ENCODE measurements at regions of chr1 and their contacts with region 1.

Region 1: GRCh38 chr1:161225534-161226319 is at the start of gene TOMM40L:
- DNase-seq: peak in 1 of 2 donors; percentile 99
- H3K4me3 ChIP-seq: peak within 1 kb of the TSS; percentile 73 to 88
- H3K27ac ChIP-seq: peak within 1 kb of the TSS; percentile 80
- H3K4me1 ChIP-seq: peaks cover 30% of the 10 kb centered on the region
- H3K27me3 ChIP-seq: no peaks in the 10 kb centered on the region
- CTCF ChIP-seq: peak in 1 of 3 experiments; percentile 61
- POLR2A ChIP-seq: no peak
- total RNA-seq, gene TOMM40L: 15.0 TPM

Region 2: DNA sequence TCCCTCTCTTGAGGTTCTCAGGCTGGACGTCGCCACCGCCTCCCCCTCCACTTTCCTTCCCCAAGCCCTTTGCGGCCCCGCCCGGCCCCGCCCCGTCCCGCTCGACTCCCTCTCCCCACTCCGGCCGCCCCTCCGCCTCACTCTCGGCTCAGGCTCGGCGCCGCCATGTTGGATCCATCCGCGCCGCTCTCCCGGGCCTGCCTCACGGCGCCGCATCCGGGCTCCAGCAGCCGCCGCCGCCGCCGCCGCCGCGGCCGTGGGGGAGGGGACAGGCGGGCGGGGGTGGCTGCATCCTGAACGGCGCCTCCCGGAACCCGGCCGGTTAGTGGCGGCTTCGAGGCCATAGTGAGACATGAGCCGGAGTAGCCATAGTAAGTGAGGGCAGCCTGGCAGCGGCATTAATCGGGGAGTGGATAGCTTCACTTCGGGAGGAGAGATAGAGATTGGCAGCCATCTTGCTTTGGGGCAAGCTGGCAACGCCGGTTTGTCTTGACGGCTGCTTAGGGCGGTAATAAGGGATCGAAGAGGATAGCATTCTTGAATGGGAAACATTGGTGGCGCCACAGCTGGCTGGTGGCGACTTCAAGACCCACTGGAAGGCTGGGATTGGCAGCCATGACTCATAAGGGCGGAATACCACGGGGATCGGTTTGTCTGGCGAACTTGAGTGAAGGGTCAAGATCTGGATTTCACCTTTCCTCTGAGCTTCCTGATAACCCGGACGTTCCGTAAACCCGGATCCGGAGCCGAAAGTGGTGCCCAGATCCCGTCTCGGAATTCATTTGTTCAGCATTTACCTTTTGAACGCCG is 93.1 kb before region 1 on chr1 and contains the start of gene DEDD:
- intact Hi-C with region 1: no loop called
- DNase-seq: peak in 1 of 2 donors; percentile 96
- H3K4me3 ChIP-seq: peak within 1 kb of the TSS; percentile 59 to 73
- H3K27ac ChIP-seq: peak within 1 kb of the TSS; percentile 96
- H3K4me1 ChIP-seq: peaks cover 52% of the 10 kb centered on the region
- H3K27me3 ChIP-seq: no peaks in the 10 kb centered on the region
- CTCF ChIP-seq: no peak
- POLR2A ChIP-seq: peak in 1 of 2 donors; percentile 36
- total RNA-seq, gene DEDD: 42.0 TPM

Region 3: DNA sequence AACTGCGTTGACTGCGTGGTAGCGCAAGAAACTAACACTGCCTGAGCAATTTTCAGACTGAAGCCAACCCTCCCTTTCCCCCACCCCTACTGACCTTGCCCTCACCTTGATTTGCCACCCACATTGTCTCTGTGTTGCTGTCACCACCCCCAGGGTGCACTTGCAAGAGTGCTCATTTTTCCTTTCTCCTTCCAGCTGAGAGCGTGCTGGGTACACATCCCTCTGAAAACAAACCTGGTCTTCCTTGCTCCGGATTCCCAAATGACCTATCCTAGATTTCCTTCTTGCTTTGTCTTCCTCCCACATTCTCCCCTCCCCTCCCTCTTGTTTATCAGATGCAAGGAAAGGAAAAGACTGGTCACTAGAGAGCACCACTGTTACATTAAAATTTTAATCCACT is 59.8 kb after region 1 on chr1:
- intact Hi-C with region 1: loop called (anchors 2 kb)
- DNase-seq: no peak
- H3K4me3 ChIP-seq: no peak overlapping the region
- H3K27ac ChIP-seq: no peak overlapping the region
- H3K4me1 ChIP-seq: no peaks in the 10 kb centered on the region
- H3K27me3 ChIP-seq: no peaks in the 10 kb centered on the region
- CTCF ChIP-seq: no peak
- POLR2A ChIP-seq: no peak

Region 4: DNA sequence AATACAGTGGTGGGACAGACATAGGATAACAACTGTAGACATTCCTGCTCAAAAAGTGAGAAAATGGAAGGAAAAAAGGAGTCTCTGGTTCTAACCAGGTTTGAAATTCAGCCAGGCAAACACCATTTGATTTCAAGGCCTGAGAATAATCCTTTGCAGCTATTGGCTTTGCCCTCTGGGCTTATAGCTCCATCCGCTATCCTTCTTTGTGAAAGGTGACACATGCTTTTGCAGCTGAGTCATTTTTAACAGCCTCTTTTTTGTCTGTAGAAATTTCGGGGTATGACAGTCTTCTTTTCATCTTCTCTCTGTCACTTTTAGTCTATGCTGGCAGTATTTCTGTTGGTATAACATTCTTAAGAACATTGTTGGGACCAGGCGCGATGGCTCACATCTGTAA is 104.6 kb after region 1 on chr1:
- intact Hi-C with region 1: no loop called
- DNase-seq: no peak
- H3K4me3 ChIP-seq: no peak overlapping the region
- H3K27ac ChIP-seq: no peak overlapping the region
- H3K4me1 ChIP-seq: no peaks in the 10 kb centered on the region
- H3K27me3 ChIP-seq: no peaks in the 10 kb centered on the region
- CTCF ChIP-seq: no peak
- POLR2A ChIP-seq: no peak

Region 5: DNA sequence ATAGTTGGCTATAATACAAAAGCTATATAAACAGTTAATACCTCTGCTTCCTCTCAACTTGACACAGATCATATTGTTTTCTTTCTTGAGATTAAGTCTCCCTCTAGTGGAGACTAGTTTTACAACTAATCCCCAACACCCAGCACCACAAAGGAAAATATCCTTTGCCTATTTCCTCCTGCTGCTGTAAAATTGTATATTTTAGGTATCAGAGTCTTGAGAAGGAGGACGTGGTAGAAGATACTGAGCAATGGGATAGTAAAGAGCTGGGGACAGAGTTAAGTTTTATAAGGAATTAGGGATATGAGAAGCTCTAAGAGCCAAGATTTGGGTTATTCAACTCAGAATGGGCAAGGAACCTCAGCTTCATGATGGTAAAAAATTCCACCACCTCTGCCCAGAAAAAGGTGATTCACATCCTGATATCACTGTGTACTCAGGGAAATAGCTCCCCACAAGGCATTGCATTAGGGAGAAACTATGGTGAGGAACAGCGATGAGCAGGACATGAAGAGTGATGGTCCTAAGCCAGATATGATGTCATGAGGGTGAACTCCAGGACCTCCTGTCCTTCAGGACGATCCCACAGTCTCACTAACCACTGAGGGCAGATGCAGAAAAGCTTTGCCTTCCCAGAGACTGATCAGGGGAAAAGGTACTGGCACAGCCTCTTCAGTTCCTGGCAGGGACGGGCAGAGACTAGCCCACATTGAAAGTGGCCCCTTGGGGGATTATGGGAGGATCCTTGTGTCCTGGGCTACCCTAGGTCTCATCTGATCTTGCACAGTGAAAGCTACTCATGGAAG is 156.7 kb after region 1 on chr1:
- intact Hi-C with region 1: loop called (anchors 5 kb)
- DNase-seq: peak in 1 of 2 donors; percentile 91
- H3K4me3 ChIP-seq: no peak overlapping the region
- H3K27ac ChIP-seq: peak overlapping the region; percentile 5
- H3K4me1 ChIP-seq: peaks cover 8% of the 10 kb centered on the region
- H3K27me3 ChIP-seq: no peaks in the 10 kb centered on the region
- CTCF ChIP-seq: peak in 2 of 3 experiments; percentile 60 to 75
- POLR2A ChIP-seq: no peak